ENCODE measurements at regions of chr1 and their contacts with region 1.

Region 1: DNA sequence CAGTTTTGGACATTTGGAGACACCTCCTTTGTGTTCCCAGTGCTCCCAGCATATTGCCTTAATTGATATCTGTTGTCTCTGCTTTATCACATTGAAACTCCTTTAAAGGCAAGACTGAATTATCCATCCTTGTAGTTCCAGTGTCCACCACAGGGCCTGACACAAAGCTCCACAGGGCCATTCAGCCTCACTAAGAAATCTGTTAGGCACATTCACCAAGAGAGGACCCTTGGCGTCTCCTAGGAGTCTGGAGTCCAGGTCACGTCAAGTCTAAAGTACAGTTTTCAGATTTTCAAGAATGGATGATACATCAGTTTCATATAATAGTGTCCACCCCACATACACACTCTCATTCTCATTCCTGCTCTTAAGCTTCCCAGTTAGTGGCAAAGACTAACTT is 4.8 kb downstream of the ACP6 start:
- DNase-seq: no peak
- H3K4me3 ChIP-seq: no peak overlapping the region
- H3K27ac ChIP-seq: no peak overlapping the region
- H3K4me1 ChIP-seq: peaks cover 0 to 6% (median 2%) of the 10 kb centered on the region in 4 experiments; a peak in 2 of 7 replicates
- H3K27me3 ChIP-seq: no peaks in the 10 kb centered on the region
- CTCF ChIP-seq: peak in 2 of 3 experiments; percentile 33 to 50; a peak in 2 of 4 replicates
- EP300 ChIP-seq: no peak
- POLR2A ChIP-seq: no peak
- RAD21 ChIP-seq: peak in 1 of 2 experiments; percentile 32; a peak in 2 of 4 replicates

Region 2: GRCh38 chr1:147640553-147641165 is 24.9 kb before region 1 on chr1:
- CTCF ChIA-PET with region 1: interaction called, 15 read pairs
- POLR2A ChIA-PET with region 1: interaction called, 3 read pairs
- DNase-seq: peak; percentile 77 to 91
- H3K4me3 ChIP-seq: no peak overlapping the region
- H3K27ac ChIP-seq: no peak overlapping the region
- H3K4me1 ChIP-seq: no peaks in the 10 kb centered on the region; a peak in 1 of 7 replicates
- H3K27me3 ChIP-seq: no peaks in the 10 kb centered on the region
- CTCF ChIP-seq: peak; percentile 84 to 93 (median 93)
- EP300 ChIP-seq: 0 out of 3 replicates have a peak, but pooled peaks of 1 of the 2 experiments have one; percentile 40
- POLR2A ChIP-seq: no peak
- RAD21 ChIP-seq: peak; percentile 65 to 71

Measured in H1 (cell line).